Dorsolateral prefrontal cortex (tissue), 120 donors: ENCODE measurements at regions of chr11 and their contacts with region 1.

Region 1: GRCh38 chr11:128453444-128454336 is 133.7 kb downstream of the ETS1 start:
- DNase-seq: peak in 9 of 10 donors; percentile 6 to 82 (median 63)
- H3K4me3 ChIP-seq: no peak overlapping the region
- H3K27ac ChIP-seq: peak overlapping the region in 34 of 59 donors; percentile 2 to 88 (median 59)
- H3K27me3 ChIP-seq: no peaks in the 10 kb centered on the region
- CTCF ChIP-seq: no peak

Region 2: DNA sequence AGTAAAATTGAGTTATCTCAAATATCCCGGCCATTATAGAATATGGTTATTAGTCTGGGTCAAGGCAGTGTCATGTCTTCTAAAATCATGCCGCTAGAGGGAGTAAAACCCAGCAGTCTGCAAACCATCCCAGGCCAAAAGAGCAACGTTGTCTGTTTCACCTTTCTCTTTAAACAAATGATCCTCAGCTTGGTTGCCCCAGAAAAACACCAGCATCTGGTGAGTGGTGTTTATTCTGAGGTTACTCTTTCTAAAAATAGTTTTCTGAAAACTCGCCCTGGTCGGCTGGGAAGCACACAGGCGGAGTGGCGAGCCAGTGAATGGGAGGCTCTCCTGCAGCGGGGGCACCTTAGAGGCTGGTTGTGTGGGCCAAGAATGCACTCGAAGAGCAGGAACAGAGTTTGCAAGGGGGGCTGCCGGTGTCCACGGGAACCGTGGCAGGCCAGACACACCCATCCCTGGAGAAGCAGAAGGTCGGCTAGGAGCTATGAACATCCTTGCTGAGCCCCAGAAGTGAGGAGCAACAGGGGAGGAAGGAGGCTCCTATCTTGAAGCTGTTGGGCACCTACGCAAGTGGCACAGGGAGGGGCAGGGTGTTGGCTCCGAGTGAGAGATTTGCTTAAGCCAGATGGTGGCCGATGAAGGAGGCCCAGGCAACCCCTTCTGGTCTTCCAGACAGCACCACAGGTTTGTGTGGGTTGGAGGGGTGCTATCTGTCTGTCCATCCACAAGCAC is 163.4 kb before region 1 on chr11:
- intact Hi-C with region 1: loop called in 1 of 2 experiments (anchors 10 kb)
- DNase-seq: peak in 3 of 10 donors; percentile 36 to 52 (median 45)
- H3K4me3 ChIP-seq: peak overlapping the region in 12 of 59 donors; percentile 5 to 37 (median 28)
- H3K27ac ChIP-seq: no peak overlapping the region
- H3K27me3 ChIP-seq: peaks cover 0 to 32% (median 0%) of the 10 kb centered on the region in 45 donors
- CTCF ChIP-seq: peak; percentile 71 to 95 (median 88)

Region 3: DNA sequence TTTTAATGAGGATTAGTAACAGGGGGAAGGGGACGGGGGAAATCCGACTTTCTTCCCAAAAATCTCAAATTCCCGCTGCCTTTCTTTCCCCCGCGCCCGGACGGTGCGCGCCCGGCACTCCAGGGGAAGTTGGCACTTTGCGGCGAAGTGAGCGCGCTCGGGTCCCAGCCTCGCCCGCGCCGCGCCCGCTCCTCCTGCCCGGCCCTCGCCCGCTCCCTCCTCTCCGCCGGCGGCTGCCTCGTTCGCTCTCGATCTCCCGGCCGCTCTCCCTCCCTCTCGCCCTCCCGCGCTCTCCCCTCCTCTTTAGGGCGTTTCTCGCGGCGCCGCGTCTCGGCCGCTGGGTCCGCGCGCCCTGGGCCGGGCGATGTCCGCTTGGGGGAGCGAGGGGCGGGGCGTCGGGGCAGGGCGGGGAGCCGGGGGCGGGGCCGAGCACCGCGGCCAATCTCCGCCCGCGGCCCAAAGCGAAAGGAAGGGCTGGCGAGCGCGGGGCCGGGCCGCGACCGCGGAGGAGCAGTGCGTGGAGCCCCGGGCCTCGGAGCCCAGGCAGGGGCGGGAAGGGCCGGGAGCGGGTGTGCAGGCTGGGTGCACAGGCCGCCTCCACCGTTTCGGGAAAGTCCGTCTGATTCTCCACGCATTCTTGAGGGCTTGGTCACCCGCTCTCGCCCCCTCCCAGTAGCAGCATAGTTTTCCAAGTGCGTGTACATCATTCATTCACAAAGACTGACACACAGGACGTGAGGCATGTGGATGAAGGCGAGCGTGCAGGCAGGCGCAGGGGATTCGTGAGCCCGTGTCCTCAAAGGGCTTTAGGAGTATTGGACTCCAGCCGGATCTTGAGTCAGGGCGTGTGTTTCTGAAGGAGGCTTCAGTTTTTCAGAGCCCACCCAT is 68.6 kb after region 1 on chr11:
- intact Hi-C with region 1: loop called (anchors 5 kb)
- DNase-seq: peak; percentile 36 to 92 (median 86)
- H3K4me3 ChIP-seq: peak overlapping the region; percentile 56 to 90 (median 77)
- H3K27ac ChIP-seq: peak overlapping the region; percentile 52 to 97 (median 91)
- H3K27me3 ChIP-seq: peaks cover 0 to 1% (median 0%) of the 10 kb centered on the region in 45 donors
- CTCF ChIP-seq: peak in 28 of 56 donors; percentile 5 to 54 (median 29)

Region 4: GRCh38 chr11:128653801-128654231 is 200.1 kb after region 1 on chr11:
- intact Hi-C with region 1: no loop called
- DNase-seq: peak in 5 of 10 donors; percentile 5 to 54 (median 29)
- H3K4me3 ChIP-seq: peak overlapping the region in 18 of 59 donors; percentile 2 to 36 (median 19)
- H3K27ac ChIP-seq: no peak overlapping the region
- H3K27me3 ChIP-seq: peaks cover 0 to 29% (median 0%) of the 10 kb centered on the region in 45 donors
- CTCF ChIP-seq: peak in 3 of 56 donors; percentile 11 to 28 (median 18)

Region 5: GRCh38 chr11:129230006-129230405 is 776.3 kb after region 1 on chr11:
- intact Hi-C with region 1: no loop called
- DNase-seq: no peak
- H3K4me3 ChIP-seq: no peak overlapping the region
- H3K27ac ChIP-seq: no peak overlapping the region
- H3K27me3 ChIP-seq: no peaks in the 10 kb centered on the region
- CTCF ChIP-seq: peak in 50 of 56 donors; percentile 9 to 73 (median 46)